ENCODE measurements at regions of chr5 and their contacts with region 1.

Region 1: DNA sequence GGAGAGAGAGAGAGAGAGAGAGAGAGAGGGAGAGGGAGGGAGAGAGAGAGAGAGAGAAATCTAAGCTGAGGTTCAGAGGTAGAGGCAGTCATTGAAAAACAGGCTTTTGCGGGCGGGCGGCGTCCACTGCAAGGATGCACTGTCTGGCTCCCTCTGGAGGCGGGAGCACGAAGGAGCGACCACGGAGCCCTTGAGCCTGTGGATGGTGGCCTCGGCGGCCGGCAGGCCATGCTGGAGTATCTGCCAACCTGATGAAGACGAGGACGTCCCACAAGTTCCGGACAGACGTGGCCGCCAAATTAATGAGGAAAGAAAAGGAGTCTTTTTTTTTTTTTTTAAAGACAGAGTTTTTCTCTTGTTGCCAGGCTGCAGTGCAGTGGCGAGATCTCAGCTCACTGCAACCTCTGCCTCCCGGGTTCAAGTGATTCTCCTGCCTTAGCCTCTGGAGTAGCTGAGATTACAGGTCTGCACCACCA is 2.2 kb upstream of the CCDC125 start:
- DNase-seq: peak; percentile 69
- H3K4me3 Mint-ChIP-seq: no peak overlapping the region
- H3K27ac Mint-ChIP-seq: peak overlapping the region; percentile 55
- H3K4me1 Mint-ChIP-seq: peaks cover 17% of the 10 kb centered on the region
- H3K27me3 Mint-ChIP-seq: peaks cover 2% of the 10 kb centered on the region

Region 2: DNA sequence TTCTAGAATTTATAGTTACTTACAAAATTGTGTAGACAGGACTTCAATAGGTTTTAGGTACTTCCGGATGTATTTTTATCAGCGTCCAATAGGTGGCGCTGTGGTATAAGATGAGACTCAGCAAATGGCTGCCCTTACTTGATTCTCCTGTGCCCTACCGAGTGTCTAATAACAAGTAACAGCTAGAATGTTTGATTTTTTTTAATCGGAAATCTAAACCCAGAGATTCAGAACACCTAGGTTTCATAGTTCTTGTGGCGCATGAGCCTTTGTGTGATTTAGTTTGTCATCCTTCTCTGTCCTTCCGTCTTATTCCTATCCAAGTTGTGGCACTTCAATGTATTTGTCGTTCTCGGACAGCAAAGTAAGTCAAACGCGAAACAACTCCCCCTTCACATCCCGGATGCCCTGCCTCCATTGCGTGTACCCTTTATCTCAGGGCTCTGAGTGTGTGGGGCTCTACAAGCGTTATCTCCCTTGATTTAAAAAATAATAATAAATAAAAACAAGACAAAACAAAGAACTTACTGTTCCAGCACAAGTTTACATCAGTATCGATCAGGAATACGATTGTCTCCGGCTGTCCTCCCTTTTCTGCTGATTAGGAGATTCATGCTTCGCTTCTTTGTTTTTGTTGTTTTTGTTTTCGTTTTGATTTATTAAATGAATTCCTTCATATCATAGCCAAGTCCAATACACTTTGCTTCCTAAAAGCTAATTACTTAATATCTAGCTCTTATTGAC is 291.7 kb before region 1 on chr5:
- intact Hi-C with region 1: loop called (anchors 1 kb)
- DNase-seq: peak; percentile 75
- H3K4me3 Mint-ChIP-seq: peak overlapping the region; percentile 84
- H3K27ac Mint-ChIP-seq: peak overlapping the region; percentile 56
- H3K4me1 Mint-ChIP-seq: peaks cover 5% of the 10 kb centered on the region
- H3K27me3 Mint-ChIP-seq: peaks cover 3% of the 10 kb centered on the region

Region 3: GRCh38 chr5:69166686-69167492 is 167.9 kb before region 1 on chr5 and contains the start of gene CCNB1:
- intact Hi-C with region 1: loop called (anchors 1 kb)
- DNase-seq: peak; percentile 99
- H3K4me3 Mint-ChIP-seq: peak within 1 kb of the TSS; percentile 90
- H3K27ac Mint-ChIP-seq: peak within 1 kb of the TSS; percentile 83
- H3K4me1 Mint-ChIP-seq: peaks cover 45% of the 10 kb centered on the region
- H3K27me3 Mint-ChIP-seq: no peaks in the 10 kb centered on the region
- total RNA-seq, gene CCNB1: 106 and 115 TPM in 2 replicates

Region 4: DNA sequence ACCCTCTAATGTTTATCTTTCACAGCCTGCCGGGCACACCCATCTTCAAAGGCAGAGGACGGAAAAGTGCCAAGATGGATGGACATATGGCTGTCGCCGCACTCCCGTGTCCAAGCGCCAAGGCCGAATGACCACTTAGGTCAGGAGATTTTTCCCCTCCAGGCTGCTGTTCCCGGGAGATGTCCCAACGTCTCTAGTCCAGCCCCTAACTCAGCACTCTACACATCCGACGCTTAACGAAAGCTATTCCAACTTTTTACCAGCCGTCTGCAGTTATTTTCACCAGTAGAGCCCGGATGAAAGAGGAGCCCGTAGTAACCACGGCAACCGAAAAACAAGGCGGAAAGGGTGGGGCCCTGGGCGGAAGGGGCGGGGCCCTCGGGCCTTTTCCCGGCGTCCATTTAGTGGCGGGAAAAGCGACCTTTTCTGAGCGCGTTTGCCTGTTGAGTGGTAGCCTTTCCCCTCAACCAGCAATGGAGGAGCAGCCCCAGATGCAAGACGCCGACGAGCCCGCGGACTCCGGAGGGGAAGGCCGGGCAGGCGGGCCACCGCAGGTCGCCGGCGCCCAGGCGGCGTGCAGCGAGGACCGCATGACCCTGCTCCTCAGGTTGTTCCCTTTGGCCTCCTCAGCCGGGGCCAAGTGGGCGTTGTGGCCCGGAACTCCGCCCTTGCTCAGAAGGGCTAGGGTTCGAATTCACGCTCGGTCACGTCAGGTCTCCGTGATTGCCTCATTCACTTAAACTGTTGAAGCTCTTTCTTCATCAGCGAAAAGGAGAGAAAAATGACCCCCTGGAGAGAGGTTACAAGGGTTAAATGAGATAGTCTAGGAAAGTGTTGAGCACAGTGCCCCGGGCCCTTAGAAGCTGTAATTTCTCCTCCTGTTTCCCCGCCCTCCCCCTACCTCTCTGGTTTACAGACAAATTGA is 145.4 kb before region 1 on chr5 and contains the start of gene CENPH:
- intact Hi-C with region 1: loop called (anchors 1 kb)
- DNase-seq: peak; percentile 92
- H3K4me3 Mint-ChIP-seq: peak within 1 kb of the TSS; percentile 94
- H3K27ac Mint-ChIP-seq: peak within 1 kb of the TSS; percentile 98
- H3K4me1 Mint-ChIP-seq: peaks cover 16% of the 10 kb centered on the region
- H3K27me3 Mint-ChIP-seq: no peaks in the 10 kb centered on the region
- total RNA-seq, gene CENPH: 32.3 and 35.5 TPM in 2 replicates

Region 5: DNA sequence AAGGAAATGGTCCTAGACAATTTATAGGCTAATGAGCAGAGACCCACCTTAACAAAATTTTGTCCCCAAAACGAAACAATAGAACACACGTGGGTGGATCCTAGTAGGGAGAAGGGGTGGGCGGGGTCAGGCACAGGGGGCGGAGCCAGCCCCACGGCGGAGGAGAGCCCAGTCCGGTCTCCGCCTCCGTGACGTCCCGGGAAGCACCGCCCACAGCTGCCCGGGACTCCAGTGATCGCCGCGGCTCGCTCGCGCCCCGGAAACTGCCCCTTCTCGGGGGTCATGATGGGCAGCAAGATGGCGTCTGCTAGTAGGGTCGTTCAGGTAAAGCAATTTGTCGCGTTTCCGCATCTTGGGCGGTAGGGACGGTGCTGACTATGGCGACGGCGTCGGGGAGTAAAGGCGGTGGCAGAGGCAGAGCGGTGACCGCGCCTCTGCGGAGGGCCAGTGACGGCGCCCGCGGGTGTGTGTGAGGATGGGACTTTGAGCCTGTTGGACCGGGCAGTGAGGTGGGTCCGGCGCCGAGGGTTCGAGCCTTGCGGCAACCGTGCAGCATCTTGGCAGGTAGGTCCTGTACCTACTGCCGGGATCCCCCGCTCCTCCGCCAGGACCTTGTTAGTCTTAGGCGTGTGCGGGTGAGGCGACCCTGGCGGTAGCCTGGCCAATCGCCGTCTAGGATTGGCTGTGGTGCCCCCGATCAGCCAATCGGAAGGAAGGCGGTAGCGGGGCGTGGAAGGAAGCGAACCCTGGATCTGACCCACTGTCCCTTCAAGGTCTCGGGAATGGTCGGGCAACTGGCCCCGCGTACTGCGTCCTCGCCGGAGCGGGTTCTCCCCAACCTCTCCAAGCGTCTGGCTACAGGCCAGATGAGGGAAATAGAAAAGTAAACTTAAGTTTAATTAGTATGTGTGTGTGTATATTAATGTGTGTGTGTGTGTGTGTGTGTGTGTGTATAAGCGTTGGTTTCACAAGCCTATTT is 117.0 kb before region 1 on chr5:
- intact Hi-C with region 1: loop called (anchors 1 kb)
- DNase-seq: peak; percentile 90
- H3K4me3 Mint-ChIP-seq: peak overlapping the region; percentile 98
- H3K27ac Mint-ChIP-seq: peak overlapping the region; percentile 95
- H3K4me1 Mint-ChIP-seq: peaks cover 15% of the 10 kb centered on the region
- H3K27me3 Mint-ChIP-seq: no peaks in the 10 kb centered on the region

Region 6: GRCh38 chr5:69234457-69235268 is 100.2 kb before region 1 on chr5 and contains the start of gene CDK7:
- intact Hi-C with region 1: loop called (anchors 1 kb)
- DNase-seq: peak; percentile 92
- H3K4me3 Mint-ChIP-seq: peak within 1 kb of the TSS; percentile 97
- H3K27ac Mint-ChIP-seq: peak within 1 kb of the TSS; percentile 84
- H3K4me1 Mint-ChIP-seq: peaks cover 43% of the 10 kb centered on the region
- H3K27me3 Mint-ChIP-seq: no peaks in the 10 kb centered on the region
- total RNA-seq, gene CDK7: 42.4 and 49.2 TPM in 2 replicates

Region 7: DNA sequence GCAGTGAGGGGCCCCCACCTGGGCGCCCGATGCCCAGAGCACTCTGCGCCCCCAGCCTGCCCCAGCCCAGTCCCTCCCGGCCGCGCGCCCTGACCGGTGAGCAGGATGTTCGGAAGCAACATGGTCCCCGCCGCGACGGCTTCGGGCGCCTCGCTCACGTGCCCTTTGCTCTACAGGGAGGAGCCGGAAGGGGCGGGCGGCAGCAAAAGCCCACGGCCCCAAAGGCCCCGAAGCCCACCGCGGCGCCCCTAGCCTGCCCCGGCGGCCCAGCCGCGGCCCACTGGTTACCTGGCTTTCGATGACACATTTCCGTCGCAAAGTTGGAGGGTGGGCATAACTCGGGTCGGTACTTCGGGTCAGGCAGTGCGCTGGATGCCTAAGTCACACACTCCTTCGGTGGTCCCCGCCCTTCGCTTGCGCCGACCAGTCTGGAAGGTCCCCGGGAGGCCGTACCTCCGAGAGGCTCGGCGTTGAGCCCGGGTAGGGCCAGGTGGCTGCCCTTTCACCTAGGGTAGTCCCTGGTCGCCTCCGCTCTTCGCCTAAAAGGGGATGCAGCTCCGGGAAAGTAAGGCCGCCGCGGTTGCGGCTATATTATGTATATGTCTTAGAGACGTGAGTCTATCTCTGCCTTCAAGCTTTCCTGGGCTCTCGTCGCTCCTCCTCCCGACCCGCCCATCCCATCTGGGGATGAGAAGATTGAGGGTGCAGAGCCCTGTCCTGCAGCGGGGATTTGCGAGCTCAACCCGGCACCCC is 34.7 kb after region 1 on chr5 and contains the starts of genes AK6, RAD17 and TAF9:
- intact Hi-C with region 1: loop called (anchors 1 kb)
- DNase-seq: peak; percentile 87
- H3K4me3 Mint-ChIP-seq: peak within 1 kb of the TSS; percentile 98
- H3K27ac Mint-ChIP-seq: peak within 1 kb of the TSS; percentile 98
- H3K4me1 Mint-ChIP-seq: peaks cover 36% of the 10 kb centered on the region
- H3K27me3 Mint-ChIP-seq: no peaks in the 10 kb centered on the region
- total RNA-seq, gene AK6: 59.0 and 62.3 TPM in 2 replicates
- total RNA-seq, gene RAD17: 22.0 and 26.9 TPM in 2 replicates
- total RNA-seq, gene TAF9: 60.0 and 65.0 TPM in 2 replicates

Measured in activated T-helper 1 cell treated with anti-CD3 and anti-CD28 coated beads, Interleukin-12 subunit alpha, Interleukin-12 subunit beta, Interleukin-2, Interleukin-4 antibody, amounts not matched to agents 30 ng/mL and 10 ng/mL and 1 ng/mL, durations not matched to agents 14 hours and 24 hours and 36 hours (primary cell).